Prostate gland (tissue), 2 donors: ENCODE measurements at regions of chr1 and their contacts with region 1.

Region 1: GRCh38 chr1:159161001-159161718 is 10.3 kb upstream of the CADM3 start:
- DNase-seq: peak; percentile 64
- H3K4me3 ChIP-seq: no peak overlapping the region
- H3K27ac ChIP-seq: no peak overlapping the region
- H3K4me1 ChIP-seq: no peaks in the 10 kb centered on the region
- H3K27me3 ChIP-seq: no peaks in the 10 kb centered on the region
- CTCF ChIP-seq: peak; percentile 74 to 96 (median 93)
- POLR2A ChIP-seq: no peak

Region 2: DNA sequence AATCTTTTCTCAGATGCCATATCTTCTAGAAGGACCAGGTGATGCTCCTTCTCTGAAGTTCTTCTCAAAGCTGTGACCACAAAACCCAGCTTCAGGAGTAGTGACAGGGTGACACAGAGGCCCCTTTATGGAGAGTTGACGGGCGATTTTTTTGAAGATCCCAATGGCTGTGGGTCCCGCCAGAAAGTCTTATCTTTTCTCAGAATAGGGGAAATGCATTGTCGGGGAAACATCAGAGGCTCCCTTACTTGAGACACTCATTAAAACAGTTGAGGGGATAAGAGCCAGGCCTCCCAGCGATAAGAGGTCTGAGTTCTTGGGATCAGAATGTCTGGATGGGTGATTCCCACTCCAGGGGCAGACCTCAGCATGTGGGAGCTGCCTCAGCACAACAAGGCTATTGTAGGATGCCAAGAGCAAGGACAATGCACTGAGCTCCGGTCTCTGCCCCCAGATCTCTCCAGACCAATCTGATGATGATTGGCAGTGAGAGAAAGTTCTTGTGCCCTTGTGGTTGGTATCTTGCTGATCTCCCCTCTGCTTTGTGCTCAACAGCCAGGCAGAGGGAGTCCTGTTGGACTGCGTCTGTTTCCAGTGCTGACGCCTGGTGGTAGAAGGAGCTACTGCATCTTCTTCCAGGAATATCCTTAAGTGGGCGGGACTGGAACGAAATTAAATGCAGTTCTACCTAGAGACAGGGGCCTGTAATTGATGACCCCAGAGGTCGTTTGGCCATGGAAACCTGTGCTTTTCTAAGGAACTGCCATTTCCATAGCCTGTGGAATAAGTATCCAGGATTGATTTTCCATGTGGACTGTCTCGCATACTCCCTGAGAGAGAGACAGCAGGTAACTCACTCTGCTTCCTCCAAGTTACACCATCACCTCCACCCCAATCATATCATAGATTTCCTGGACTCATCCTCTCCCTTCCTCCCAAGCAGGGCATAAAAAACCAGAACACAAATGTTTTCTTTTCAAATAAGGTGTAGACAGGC is 36.7 kb after region 1 on chr1:
- intact Hi-C with region 1: loop called (anchors 5 kb)
- DNase-seq: peak; percentile 62
- H3K4me3 ChIP-seq: no peak overlapping the region
- H3K27ac ChIP-seq: no peak overlapping the region
- H3K4me1 ChIP-seq: no peaks in the 10 kb centered on the region
- H3K27me3 ChIP-seq: peaks cover 7% of the 10 kb centered on the region
- CTCF ChIP-seq: peak; percentile 56 to 81 (median 72)
- POLR2A ChIP-seq: no peak

Region 3: GRCh38 chr1:159214149-159214760 is 53.1 kb after region 1 on chr1:
- intact Hi-C with region 1: loop called (anchors 2 kb)
- DNase-seq: no peak
- H3K4me3 ChIP-seq: no peak overlapping the region
- H3K27ac ChIP-seq: no peak overlapping the region
- H3K4me1 ChIP-seq: no peaks in the 10 kb centered on the region
- H3K27me3 ChIP-seq: peaks cover 4% of the 10 kb centered on the region
- CTCF ChIP-seq: peak; percentile 47 to 72 (median 64)
- POLR2A ChIP-seq: no peak

Region 4: DNA sequence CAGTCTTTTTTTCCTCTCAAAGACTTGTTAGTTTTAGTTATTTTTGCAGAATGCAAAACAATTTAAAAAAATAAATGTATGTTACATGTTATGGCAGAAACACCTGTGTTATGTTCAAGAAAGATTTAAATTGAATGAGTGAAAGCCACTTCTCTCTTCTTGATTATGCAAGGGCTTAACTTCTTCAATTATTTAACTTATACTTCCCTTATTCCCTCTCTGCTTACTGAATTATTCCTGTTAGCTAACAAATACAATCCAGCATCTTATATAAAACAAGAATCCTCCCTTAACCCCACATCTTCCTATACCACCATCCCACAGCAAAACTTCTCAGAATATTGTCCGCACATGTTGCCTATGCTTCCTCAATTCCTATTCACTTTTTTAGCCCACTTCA is 130.3 kb after region 1 on chr1:
- intact Hi-C with region 1: no loop called
- DNase-seq: no peak
- H3K4me3 ChIP-seq: no peak overlapping the region
- H3K27ac ChIP-seq: no peak overlapping the region
- H3K4me1 ChIP-seq: no peaks in the 10 kb centered on the region
- H3K27me3 ChIP-seq: no peaks in the 10 kb centered on the region
- CTCF ChIP-seq: no peak
- POLR2A ChIP-seq: no peak